ENCODE measurements at regions of chr6 and their contacts with region 1.

Region 1: GRCh38 chr6:27161946-27162603 is 85.4 kb upstream of the PRSS16 start:
- DNase-seq: no peak

Region 2: DNA sequence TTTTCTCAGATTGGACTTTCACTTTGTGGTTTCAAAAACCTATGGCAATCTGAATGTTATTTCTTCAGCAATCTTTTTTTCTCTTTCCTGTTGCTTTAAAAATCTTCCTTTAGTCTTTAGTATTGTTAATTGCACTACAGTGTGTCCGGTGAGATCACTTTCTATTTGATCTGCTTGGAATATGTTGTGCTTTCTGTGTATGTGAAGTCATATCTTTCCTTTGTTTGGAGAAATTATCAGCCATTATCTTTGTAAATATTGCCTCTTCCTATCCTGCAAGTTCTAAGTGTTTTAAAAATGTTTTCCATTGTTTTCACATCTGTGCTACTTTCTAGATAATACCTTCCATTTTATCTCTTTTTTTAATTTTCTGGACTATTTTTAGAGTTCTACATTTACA is 86.0 kb before region 1 on chr6:
- intact Hi-C with region 1: no loop called
- DNase-seq: no peak

Region 3: GRCh38 chr6:27795697-27796494 is 633.8 kb after region 1 on chr6:
- intact Hi-C with region 1: loop called (anchors 5 kb)
- DNase-seq: no peak